T-cell (primary cell): ENCODE measurements at regions of chr2 and their contacts with region 1.

Region 1: DNA sequence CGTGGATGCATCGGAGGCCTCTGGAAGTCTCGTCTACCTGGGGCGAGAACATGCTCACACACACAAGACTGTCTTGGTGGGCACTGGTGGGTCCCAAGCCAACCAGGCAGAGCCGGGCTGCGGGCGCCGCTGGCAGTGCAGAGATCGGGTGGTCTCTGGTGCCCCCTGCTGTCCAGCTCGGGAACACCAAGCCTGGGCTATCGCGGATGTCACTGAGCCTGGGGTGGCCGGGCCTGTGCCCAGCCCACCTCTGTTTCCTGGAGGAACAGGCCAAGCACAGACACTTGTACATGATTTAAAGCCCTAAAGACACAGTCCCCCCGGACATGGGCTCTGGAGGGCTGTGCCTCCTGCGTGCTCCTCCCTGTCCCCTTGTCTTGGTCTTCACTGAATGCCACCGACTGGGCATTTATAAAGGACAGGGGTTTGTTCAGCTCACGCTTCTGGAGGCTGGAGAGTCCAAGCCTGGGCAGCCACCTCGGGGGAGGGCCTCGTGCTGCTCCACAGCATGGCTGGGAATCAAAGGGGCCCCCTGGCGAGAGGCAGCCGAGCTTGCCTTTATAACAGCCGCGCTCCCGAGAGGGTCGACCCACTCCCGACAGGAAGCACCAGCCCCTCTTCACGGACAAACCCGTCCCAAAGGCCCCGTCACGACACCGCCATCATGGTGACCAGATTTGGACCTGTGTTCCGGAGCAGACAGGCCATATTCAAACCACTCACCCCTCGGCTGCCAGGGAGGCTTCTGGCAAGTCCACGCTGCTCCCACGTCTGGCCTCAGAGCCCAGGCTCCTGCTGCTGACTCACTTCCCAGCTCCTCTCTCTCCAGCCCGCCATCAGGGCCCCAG is 3.6 kb upstream of the OTOS start:
- DNase-seq: peak; percentile 41 to 87 (median 75)
- ATAC-seq: peak; percentile 91 to 98 (median 94)
- H3K4me3 ChIP-seq: no peak overlapping the region
- H3K4me3 Mint-ChIP-seq: no peak overlapping the region
- H3K27ac ChIP-seq: no peak overlapping the region
- H3K27ac Mint-ChIP-seq: no peak overlapping the region
- H3K4me1 ChIP-seq: peaks cover 0 to 8% of the 10 kb centered on the region in 2 experiments
- H3K4me1 Mint-ChIP-seq: peaks cover 0 to 2% (median 1%) of the 10 kb centered on the region in 3 donors
- H3K27me3 ChIP-seq: peaks cover 0 to 40% of the 10 kb centered on the region in 2 experiments
- H3K27me3 Mint-ChIP-seq: peaks cover 4 to 6% of the 10 kb centered on the region in 2 donors

Region 2: GRCh38 chr2:240060977-240061591 is 82.9 kb before region 1 on chr2:
- CTCF ChIA-PET with region 1: interaction called, 20 to 41 read pairs
- POLR2A ChIA-PET with region 1: no interaction called
- DNase-seq: peak in 27 of 35 experiments; percentile 16 to 71 (median 38)
- ATAC-seq: peak; percentile 67 to 75 (median 71)
- H3K4me3 ChIP-seq: no peak overlapping the region
- H3K4me3 Mint-ChIP-seq: no peak overlapping the region
- H3K27ac ChIP-seq: no peak overlapping the region
- H3K27ac Mint-ChIP-seq: no peak overlapping the region
- H3K4me1 ChIP-seq: no peaks in the 10 kb centered on the region
- H3K4me1 Mint-ChIP-seq: no peaks in the 10 kb centered on the region
- H3K27me3 ChIP-seq: peaks cover 9 to 29% of the 10 kb centered on the region in 2 experiments
- H3K27me3 Mint-ChIP-seq: peaks cover 24 to 29% of the 10 kb centered on the region in 2 donors

Region 3: DNA sequence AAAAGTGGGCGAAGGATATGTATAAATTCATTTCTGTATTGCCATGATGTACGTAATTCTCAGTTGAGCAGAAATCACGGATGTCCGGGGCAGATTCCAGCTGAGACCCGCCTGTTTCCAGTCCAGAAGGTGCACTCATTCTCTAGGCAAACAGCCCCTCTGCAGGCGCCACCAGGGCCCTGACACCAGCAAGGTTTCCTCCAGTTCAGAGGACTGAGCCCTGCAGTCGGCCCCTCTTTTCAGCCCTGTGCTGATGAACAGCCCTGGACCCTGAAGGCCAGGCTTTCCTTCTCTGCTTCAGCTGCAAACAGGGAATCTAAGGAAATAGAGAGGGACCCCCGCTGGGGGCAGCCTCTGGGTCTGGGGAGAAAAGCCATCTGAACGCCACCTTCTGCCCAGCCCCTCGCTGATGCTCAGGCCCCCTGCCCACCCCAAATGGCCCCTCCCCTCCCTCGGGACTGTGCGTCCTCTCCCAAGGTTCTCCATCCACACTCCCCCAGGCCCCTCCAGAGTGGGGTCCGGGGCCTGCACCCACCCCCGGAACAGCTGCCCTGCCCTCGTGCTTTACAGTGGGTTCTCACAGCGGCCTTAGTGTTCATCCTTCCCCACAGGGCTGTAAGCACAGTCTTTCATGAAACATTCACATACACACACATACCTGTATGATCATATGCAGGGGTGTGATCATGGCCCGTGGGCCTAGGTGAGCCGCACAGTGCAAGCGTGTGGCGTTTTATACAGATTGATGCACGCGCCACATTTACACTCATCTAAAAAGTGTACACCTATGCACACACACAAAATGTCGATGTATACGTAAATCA is 20.0 kb before region 1 on chr2:
- CTCF ChIA-PET with region 1: no interaction called
- POLR2A ChIA-PET with region 1: no interaction called
- DNase-seq: no peak
- ATAC-seq: no peak
- H3K4me3 ChIP-seq: no peak overlapping the region
- H3K4me3 Mint-ChIP-seq: no peak overlapping the region
- H3K27ac ChIP-seq: no peak overlapping the region
- H3K27ac Mint-ChIP-seq: no peak overlapping the region
- H3K4me1 ChIP-seq: no peaks in the 10 kb centered on the region
- H3K4me1 Mint-ChIP-seq: peaks cover 0 to 6% (median 5%) of the 10 kb centered on the region in 3 donors
- H3K27me3 ChIP-seq: no peaks in the 10 kb centered on the region
- H3K27me3 Mint-ChIP-seq: no peaks in the 10 kb centered on the region